ENCODE measurements at regions of chr5 and their contacts with region 1.

Region 1: DNA sequence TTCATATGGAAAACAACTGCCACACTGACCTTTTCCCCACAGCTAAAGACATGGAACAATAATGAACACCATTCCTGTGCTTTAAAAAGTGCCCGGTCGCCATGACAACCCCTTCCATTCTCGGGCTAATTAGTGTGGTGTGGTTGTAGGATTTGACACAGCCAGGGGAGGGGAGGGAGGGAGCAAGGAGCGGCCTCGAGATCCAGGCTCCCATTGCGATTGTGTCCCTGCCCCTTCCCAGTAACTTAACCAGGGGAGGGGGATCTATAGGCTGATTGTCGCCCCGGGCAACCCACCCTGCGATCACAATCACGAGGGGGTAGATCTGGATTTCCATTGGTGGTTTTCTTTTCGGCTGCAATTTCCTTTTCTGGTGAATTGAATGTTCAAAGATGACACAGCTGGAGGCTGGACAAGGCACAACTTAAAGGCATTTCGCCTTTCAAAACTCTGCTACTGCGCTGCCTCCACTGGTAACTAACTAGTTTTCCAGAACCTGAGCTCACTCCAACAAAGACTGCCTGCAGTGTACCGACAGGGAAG is 96.7 kb upstream of the RETREG1 start:
- DNase-seq: no peak
- ATAC-seq: no peak
- H3K4me3 ChIP-seq: peak overlapping the region in 1 of 2 donors; percentile 44
- H3K4me3 Mint-ChIP-seq: peak overlapping the region in 1 of 3 donors; percentile 0
- H3K27ac ChIP-seq: no peak overlapping the region
- H3K27ac Mint-ChIP-seq: no peak overlapping the region
- H3K4me1 ChIP-seq: no peaks in the 10 kb centered on the region
- H3K4me1 Mint-ChIP-seq: peaks cover 0 to 4% (median 4%) of the 10 kb centered on the region in 3 donors
- H3K27me3 ChIP-seq: peaks cover 0 to 13% of the 10 kb centered on the region in 2 experiments
- H3K27me3 Mint-ChIP-seq: peaks cover 12 to 25% of the 10 kb centered on the region in 2 donors

Region 2: GRCh38 chr5:14768508-14769365 is 1944.7 kb before region 1 on chr5:
- CTCF ChIA-PET with region 1: interaction called in 1 of 2 experiments, 15 read pairs
- POLR2A ChIA-PET with region 1: no interaction called
- DNase-seq: no peak
- ATAC-seq: no peak
- H3K4me3 ChIP-seq: no peak overlapping the region
- H3K4me3 Mint-ChIP-seq: no peak overlapping the region
- H3K27ac ChIP-seq: no peak overlapping the region
- H3K27ac Mint-ChIP-seq: peak overlapping the region in 1 of 2 donors; percentile 18
- H3K4me1 ChIP-seq: peaks cover 0 to 3% of the 10 kb centered on the region in 2 experiments
- H3K4me1 Mint-ChIP-seq: peaks cover 15 to 37% (median 34%) of the 10 kb centered on the region in 3 donors
- H3K27me3 ChIP-seq: no peaks in the 10 kb centered on the region
- H3K27me3 Mint-ChIP-seq: no peaks in the 10 kb centered on the region

Region 3: GRCh38 chr5:16169550-16169949 is 543.9 kb before region 1 on chr5:
- CTCF ChIA-PET with region 1: no interaction called
- POLR2A ChIA-PET with region 1: interaction called in 1 of 2 experiments, 13 read pairs
- DNase-seq: no peak
- ATAC-seq: no peak
- H3K4me3 ChIP-seq: no peak overlapping the region
- H3K4me3 Mint-ChIP-seq: no peak overlapping the region
- H3K27ac ChIP-seq: no peak overlapping the region
- H3K27ac Mint-ChIP-seq: no peak overlapping the region
- H3K4me1 ChIP-seq: no peaks in the 10 kb centered on the region
- H3K4me1 Mint-ChIP-seq: no peaks in the 10 kb centered on the region
- H3K27me3 ChIP-seq: peaks cover 0 to 3% of the 10 kb centered on the region in 2 experiments
- H3K27me3 Mint-ChIP-seq: peaks cover 4 to 21% of the 10 kb centered on the region in 2 donors

Region 4: GRCh38 chr5:16656561-16657191 is 56.8 kb before region 1 on chr5:
- CTCF ChIA-PET with region 1: no interaction called
- POLR2A ChIA-PET with region 1: no interaction called
- DNase-seq: no peak
- ATAC-seq: no peak
- H3K4me3 ChIP-seq: no peak overlapping the region
- H3K4me3 Mint-ChIP-seq: no peak overlapping the region
- H3K27ac ChIP-seq: no peak overlapping the region
- H3K27ac Mint-ChIP-seq: no peak overlapping the region
- H3K4me1 ChIP-seq: no peaks in the 10 kb centered on the region
- H3K4me1 Mint-ChIP-seq: peaks cover 0 to 1% (median 0%) of the 10 kb centered on the region in 3 donors
- H3K27me3 ChIP-seq: no peaks in the 10 kb centered on the region
- H3K27me3 Mint-ChIP-seq: no peaks in the 10 kb centered on the region